ENCODE measurements at regions of chr13 and their contacts with region 1.

Region 1: DNA sequence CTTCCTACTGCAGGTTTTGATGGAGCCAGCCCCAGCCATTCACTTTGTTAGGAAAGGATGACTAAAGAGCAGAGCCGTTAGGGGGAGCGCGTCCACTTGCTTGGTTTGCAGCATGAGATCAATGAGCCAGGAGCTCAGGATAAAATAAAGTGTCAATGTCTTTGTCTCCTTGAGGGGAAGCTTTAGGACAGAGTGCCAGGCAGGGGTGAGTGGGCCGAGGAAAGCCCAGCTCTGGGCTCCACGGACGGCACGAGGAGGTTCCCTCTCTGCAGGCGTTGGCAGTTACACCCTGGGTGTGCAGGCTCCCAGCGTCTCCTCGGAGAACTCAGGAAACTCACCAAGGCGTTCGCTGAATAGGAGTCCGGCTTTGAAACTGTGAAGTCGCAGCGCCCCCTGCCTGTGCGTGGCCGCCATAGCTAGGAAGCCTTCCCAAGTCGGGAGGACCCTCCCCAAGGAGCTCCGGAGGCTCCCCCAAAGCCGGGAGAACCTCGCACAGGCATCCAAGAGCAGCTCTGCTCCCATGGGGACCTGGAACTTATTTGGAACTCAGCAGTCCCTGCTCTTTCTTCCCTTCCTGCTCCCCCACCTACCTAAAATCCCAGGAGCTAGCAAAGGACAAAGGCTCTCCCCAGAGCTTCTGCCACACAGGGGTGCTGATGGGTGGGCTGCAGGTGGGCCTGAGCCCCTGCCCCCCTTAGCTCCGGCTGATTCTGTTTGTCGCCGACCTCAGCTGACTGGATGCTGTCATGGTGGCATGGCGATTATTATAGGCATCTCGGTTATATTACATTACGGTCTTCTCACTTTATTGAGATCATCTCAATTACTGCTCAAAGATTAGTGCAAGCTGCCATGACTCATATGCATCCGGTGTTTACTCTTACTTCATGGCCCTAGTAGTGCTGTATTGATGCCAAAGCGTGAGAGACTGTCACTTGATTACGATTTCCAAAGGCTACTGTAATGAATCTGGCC is 34.4 kb downstream of the GSX1 start:
- DNase-seq: peak; percentile 43 to 70 (median 52)
- H3K4me3 ChIP-seq: no peak overlapping the region
- H3K4me3 Mint-ChIP-seq: no peak overlapping the region
- H3K27ac ChIP-seq: no peak overlapping the region
- H3K27ac Mint-ChIP-seq: no peak overlapping the region
- H3K4me1 ChIP-seq: peaks cover 11% of the 10 kb centered on the region
- H3K4me1 Mint-ChIP-seq: peaks cover 7 to 18% (median 16%) of the 10 kb centered on the region in 3 donors
- H3K27me3 ChIP-seq: peaks cover 13% of the 10 kb centered on the region
- H3K27me3 Mint-ChIP-seq: peaks cover 43 to 79% of the 10 kb centered on the region in 2 donors

Region 2: DNA sequence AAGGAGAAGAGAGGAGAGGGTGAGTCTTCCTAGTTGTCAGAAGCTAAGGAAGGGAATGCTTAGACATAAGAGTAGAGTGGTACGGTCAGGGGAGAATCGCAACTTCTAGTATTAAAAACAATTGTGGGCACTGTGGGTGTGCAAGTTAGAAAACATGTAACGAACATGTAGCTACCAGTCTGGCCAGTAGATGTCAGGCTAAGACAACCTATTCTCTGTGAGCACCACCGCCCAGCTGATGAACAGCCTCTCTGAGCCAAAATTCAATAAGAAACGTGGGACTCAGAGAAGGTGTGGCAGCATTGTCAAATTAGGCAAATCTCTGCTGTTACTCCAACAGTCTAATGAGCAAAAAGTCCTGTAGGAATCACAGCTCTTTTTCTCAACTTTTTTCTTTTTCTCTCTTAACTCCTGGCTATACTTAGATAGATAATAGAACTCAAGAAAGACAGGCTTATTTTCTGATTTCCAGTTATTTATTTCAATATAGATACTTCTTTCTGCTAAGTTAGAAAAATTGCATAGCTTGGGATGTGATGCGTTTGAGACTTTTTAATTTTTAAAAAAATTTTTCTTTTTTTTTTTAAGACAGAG is 841.3 kb before region 1 on chr13:
- CTCF ChIA-PET with region 1: interaction called, 19 read pairs
- POLR2A ChIA-PET with region 1: no interaction called
- DNase-seq: peak; percentile 40 to 75 (median 61)
- H3K4me3 ChIP-seq: no peak overlapping the region
- H3K4me3 Mint-ChIP-seq: no peak overlapping the region
- H3K27ac ChIP-seq: no peak overlapping the region
- H3K27ac Mint-ChIP-seq: no peak overlapping the region
- H3K4me1 ChIP-seq: no peaks in the 10 kb centered on the region
- H3K4me1 Mint-ChIP-seq: peaks cover 2 to 3% (median 3%) of the 10 kb centered on the region in 3 donors
- H3K27me3 ChIP-seq: no peaks in the 10 kb centered on the region
- H3K27me3 Mint-ChIP-seq: peaks cover 18 to 21% of the 10 kb centered on the region in 2 donors

Region 3: GRCh38 chr13:27374650-27375049 is 452.0 kb before region 1 on chr13:
- CTCF ChIA-PET with region 1: interaction called, 74 read pairs
- POLR2A ChIA-PET with region 1: no interaction called
- DNase-seq: peak in 4 of 5 donors; percentile 28 to 65 (median 42)
- H3K4me3 ChIP-seq: no peak overlapping the region
- H3K4me3 Mint-ChIP-seq: no peak overlapping the region
- H3K27ac ChIP-seq: no peak overlapping the region
- H3K27ac Mint-ChIP-seq: no peak overlapping the region
- H3K4me1 ChIP-seq: no peaks in the 10 kb centered on the region
- H3K4me1 Mint-ChIP-seq: peaks cover 4 to 7% (median 6%) of the 10 kb centered on the region in 3 donors
- H3K27me3 ChIP-seq: no peaks in the 10 kb centered on the region
- H3K27me3 Mint-ChIP-seq: peaks cover 15 to 44% of the 10 kb centered on the region in 2 donors

Region 4: DNA sequence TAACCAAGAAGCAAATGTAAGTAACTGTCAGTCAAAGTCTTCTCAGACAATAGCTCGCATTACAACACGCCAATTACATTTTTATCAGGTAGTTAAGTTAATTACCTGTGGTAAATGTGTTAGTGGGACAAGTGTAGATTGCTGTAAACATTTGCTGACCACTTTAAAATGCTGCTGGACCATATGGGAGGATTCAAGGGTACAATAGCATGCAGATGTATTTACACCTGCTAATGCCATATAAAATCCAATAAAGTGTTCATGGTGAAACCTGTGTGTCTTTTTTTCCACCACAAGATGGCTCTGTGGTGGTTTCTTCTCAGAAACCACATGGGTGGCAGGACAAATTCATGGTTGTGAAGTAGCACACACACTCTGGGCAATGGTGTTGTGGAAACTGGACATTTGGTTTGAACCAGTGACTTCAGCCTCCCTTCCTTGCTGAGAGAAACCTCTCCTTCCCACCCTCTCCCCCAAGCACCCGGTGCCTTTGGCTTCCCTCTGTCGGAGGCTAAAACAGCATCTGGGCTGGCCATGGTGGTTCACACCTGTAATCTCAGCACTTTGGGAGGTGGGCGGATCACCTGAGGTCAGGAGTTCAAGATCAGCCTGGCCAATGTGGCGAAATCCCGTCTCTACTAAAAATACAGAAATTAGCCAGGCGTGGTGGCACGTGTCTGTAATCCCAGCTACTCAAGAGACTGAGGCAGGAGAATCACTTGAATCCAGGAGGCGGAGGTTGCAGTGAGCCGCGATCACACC is 420.3 kb before region 1 on chr13:
- CTCF ChIA-PET with region 1: interaction called, 20 read pairs
- POLR2A ChIA-PET with region 1: no interaction called
- DNase-seq: peak in 4 of 5 donors; percentile 12 to 60 (median 46)
- H3K4me3 ChIP-seq: no peak overlapping the region
- H3K4me3 Mint-ChIP-seq: peak overlapping the region in 2 of 7 donors; percentile 20 to 68
- H3K27ac ChIP-seq: no peak overlapping the region
- H3K27ac Mint-ChIP-seq: peak overlapping the region in 2 of 8 donors; percentile 53 to 54
- H3K4me1 ChIP-seq: peaks cover 8% of the 10 kb centered on the region
- H3K4me1 Mint-ChIP-seq: peaks cover 4 to 5% (median 5%) of the 10 kb centered on the region in 3 donors
- H3K27me3 ChIP-seq: peaks cover 7% of the 10 kb centered on the region
- H3K27me3 Mint-ChIP-seq: peaks cover 19 to 35% of the 10 kb centered on the region in 2 donors

Region 5: DNA sequence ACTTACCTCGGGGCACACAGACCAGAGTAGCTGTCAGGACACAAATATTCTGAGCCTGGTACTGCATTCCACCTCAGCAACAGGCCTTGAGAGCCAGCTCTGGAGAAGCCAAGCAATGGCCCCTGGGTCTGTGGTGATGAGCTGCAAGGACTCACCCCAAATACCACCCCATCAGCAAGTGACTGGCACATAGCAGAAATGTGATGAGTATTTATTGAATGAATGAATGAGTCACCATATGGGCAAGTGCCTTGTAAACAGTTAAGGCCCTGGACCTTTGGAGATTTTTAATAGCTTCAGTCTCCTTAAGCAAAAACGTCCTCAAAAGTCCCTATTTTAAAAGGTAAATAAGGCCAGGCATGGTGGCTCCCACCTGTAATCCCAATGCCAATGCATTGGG is 16.2 kb before region 1 on chr13:
- CTCF ChIA-PET with region 1: interaction called, 15 read pairs
- POLR2A ChIA-PET with region 1: no interaction called
- DNase-seq: no peak
- H3K4me3 ChIP-seq: no peak overlapping the region
- H3K4me3 Mint-ChIP-seq: no peak overlapping the region
- H3K27ac ChIP-seq: no peak overlapping the region
- H3K27ac Mint-ChIP-seq: peak overlapping the region in 2 of 8 donors; percentile 44 to 59
- H3K4me1 ChIP-seq: no peaks in the 10 kb centered on the region
- H3K4me1 Mint-ChIP-seq: no peaks in the 10 kb centered on the region
- H3K27me3 ChIP-seq: no peaks in the 10 kb centered on the region
- H3K27me3 Mint-ChIP-seq: peaks cover 26 to 71% of the 10 kb centered on the region in 2 donors

Region 6: GRCh38 chr13:27953676-27954405 is 127.2 kb after region 1 on chr13:
- CTCF ChIA-PET with region 1: interaction called, 10 read pairs
- POLR2A ChIA-PET with region 1: no interaction called
- DNase-seq: peak in 4 of 5 donors; percentile 30 to 54 (median 32)
- H3K4me3 ChIP-seq: peak overlapping the region; percentile 22
- H3K4me3 Mint-ChIP-seq: peak overlapping the region; percentile 58 to 86 (median 70)
- H3K27ac ChIP-seq: no peak overlapping the region
- H3K27ac Mint-ChIP-seq: no peak overlapping the region
- H3K4me1 ChIP-seq: peaks cover 6% of the 10 kb centered on the region
- H3K4me1 Mint-ChIP-seq: peaks cover 8 to 22% (median 10%) of the 10 kb centered on the region in 3 donors
- H3K27me3 ChIP-seq: peaks cover 28% of the 10 kb centered on the region
- H3K27me3 Mint-ChIP-seq: peaks cover 50 to 73% of the 10 kb centered on the region in 2 donors